ENCODE measurements at regions of chr12 and their contacts with region 1.

Region 1: GRCh38 chr12:71663561-71664294 is at the start of gene ZFC3H1:
- DNase-seq: peak; percentile 93 to 97 (median 96)
- ATAC-seq: peak; percentile 96 to 98 (median 96)
- H3K4me3 ChIP-seq: peak within 1 kb of the TSS; percentile 70 to 97 (median 88)
- H3K27ac ChIP-seq: peak within 1 kb of the TSS; percentile 89 to 98 (median 94)
- H3K4me1 ChIP-seq: peaks cover 0 to 44% (median 28%) of the 10 kb centered on the region in 12 donors
- H3K27me3 ChIP-seq: no peaks in the 10 kb centered on the region
- CTCF ChIP-seq: peak in 6 of 12 donors; percentile 19 to 60 (median 40)
- POLR2A ChIP-seq: peak; percentile 32 to 81
- total RNA-seq, gene ZFC3H1: 15.6 to 27.3 (median 18.2) TPM

Region 2: DNA sequence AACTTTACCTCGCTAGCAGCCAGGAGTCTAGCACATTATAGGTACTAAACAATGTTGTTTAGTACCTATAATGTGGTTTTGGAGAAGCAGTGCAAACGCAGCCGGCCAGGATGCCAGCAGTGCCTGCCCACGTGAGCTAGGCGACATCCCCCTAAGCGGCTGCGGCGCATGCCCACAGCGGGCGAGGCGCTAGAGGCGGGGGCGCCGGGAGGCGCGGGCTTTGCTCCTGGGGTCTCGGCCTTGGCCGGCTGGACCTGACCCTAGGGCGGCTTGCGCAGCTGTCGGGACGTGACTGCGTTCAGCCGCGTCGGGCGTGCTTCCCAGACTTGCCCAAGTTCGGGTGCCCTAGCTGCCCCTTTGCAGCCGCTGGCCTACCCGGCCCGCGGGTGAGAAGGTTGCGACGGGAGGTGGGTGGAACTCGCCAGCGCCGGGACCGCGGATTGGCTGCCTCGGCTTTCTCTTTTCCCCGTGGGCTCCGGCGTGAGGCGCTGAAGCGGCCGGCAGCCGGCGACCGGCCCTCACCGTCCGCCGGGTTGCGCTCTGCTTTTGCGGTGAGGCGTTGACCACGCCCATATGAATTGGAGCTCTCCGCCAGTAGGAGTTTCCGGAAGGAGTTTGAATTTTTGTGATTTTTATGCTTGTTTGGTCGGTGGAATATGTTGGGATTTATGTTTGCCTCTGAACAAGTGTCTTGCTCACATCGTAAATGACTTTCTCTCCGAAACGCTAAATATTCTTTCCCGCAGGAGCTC is 22.4 kb after region 1 on chr12 and contains the start of gene TMEM19:
- intact Hi-C with region 1: loop called in 4 of 10 experiments (anchors 1 to 2 kb)
- DNase-seq: peak; percentile 92 to 95 (median 93)
- ATAC-seq: peak; percentile 95 to 99 (median 99)
- H3K4me3 ChIP-seq: peak within 1 kb of the TSS; percentile 50 to 88 (median 78)
- H3K27ac ChIP-seq: peak within 1 kb of the TSS; percentile 54 to 99 (median 94)
- H3K4me1 ChIP-seq: peaks cover 0 to 46% (median 20%) of the 10 kb centered on the region in 12 donors
- H3K27me3 ChIP-seq: no peaks in the 10 kb centered on the region
- CTCF ChIP-seq: peak in 5 of 12 donors; percentile 17 to 61 (median 47)
- POLR2A ChIP-seq: peak in 1 of 2 donors; percentile 76
- total RNA-seq, gene TMEM19: 15.5 to 39.5 (median 28.8) TPM

Region 3: DNA sequence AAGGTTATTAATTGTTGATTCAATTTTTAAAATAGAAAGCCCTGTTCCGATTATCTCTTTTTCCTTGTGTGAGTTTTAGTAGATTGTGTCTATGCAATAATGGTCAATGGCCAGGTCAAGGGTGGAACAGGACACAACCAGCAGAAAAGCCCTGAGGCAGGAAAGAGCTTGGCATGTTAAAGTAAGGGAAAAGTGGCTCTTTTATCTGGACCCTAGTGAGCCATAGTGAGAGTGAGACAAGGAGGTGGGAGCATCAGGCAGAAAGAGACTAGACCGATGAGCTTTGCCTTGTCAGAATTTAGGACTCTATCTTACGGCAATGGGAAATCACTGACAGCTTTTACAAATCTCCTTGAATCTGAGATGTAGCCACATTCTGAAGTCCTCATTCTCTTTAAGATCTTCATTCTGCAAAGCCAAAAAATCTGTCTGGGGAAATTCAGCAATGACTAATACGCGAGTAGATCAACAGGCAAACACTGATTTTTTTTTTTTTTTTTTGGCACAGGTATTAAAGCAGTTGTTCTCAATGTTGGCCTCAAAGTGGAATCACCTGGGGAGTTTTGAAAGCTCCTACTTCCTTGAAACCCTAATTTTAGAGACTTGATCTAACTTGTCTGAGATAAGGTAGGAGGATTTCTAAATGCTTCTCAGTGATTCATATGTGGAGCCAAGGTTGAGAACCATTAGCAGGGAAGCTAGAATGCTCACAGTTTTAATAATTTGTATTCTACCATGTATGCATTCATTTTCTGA is 56.1 kb after region 1 on chr12:
- intact Hi-C with region 1: no loop called
- DNase-seq: no peak
- ATAC-seq: no peak
- H3K4me3 ChIP-seq: no peak overlapping the region
- H3K27ac ChIP-seq: no peak overlapping the region
- H3K4me1 ChIP-seq: no peaks in the 10 kb centered on the region
- H3K27me3 ChIP-seq: no peaks in the 10 kb centered on the region
- CTCF ChIP-seq: no peak
- POLR2A ChIP-seq: no peak

Region 4: GRCh38 chr12:71754461-71755145 is 90.9 kb after region 1 on chr12 and contains the start of gene RAB21:
- intact Hi-C with region 1: loop called in 6 of 10 experiments (anchors 2 to 10 kb)
- DNase-seq: peak; percentile 99
- ATAC-seq: peak; percentile 95 to 98 (median 96)
- H3K4me3 ChIP-seq: peak within 1 kb of the TSS; percentile 59 to 97 (median 87)
- H3K27ac ChIP-seq: peak within 1 kb of the TSS; percentile 93 to 98 (median 96)
- H3K4me1 ChIP-seq: peaks cover 0 to 42% (median 24%) of the 10 kb centered on the region in 12 donors
- H3K27me3 ChIP-seq: peaks cover 0 to 3% (median 0%) of the 10 kb centered on the region in 9 donors
- CTCF ChIP-seq: peak in 11 of 12 donors; percentile 13 to 56 (median 30)
- POLR2A ChIP-seq: peak; percentile 77 to 92
- total RNA-seq, gene RAB21: 42.4 to 236 (median 198) TPM

Region 5: DNA sequence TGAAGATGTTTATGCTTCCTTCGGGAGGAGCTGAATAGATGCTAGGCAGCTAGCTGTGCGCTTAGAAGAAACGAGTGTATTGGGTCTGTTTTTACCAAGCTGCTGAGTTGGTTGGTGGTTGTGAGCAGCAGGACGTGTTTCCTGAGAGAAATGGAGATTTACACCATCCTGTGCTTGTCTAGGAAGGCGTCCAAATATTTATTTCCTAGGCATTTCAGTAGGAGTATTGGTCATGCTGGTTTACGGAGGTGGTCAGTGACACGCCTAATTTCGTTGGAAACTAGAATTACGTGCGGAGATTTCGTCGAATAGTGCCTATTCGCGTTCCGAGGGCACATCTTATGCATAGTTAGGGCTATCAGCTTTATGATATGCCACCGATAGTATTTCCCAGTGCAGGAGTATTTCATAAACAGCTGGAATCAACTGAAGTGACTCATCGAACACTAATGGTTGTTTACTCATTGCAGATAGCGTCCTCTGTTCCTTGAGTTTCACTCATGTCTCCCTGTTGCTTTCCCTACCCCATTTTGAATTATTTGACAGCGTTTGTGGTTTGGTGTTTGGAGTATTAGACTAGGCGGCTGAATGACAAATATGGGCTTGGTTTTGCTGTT is 176.6 kb after region 1 on chr12:
- intact Hi-C with region 1: loop called in 1 of 10 experiments (anchors 10 kb)
- DNase-seq: no peak
- ATAC-seq: peak in 3 of 4 donors; percentile 5 to 51 (median 14)
- H3K4me3 ChIP-seq: peak overlapping the region; percentile 53 to 94 (median 74)
- H3K27ac ChIP-seq: peak overlapping the region; percentile 83 to 99 (median 91)
- H3K4me1 ChIP-seq: peaks cover 2 to 50% (median 34%) of the 10 kb centered on the region in 12 donors
- H3K27me3 ChIP-seq: no peaks in the 10 kb centered on the region
- CTCF ChIP-seq: no peak
- POLR2A ChIP-seq: no peak